CD8-positive, alpha-beta T cell (primary cell): ENCODE measurements at regions of chr1 and their contacts with region 1.

Region 1: GRCh38 chr1:169794530-169795416 is at the start of gene METTL18:
- DNase-seq: peak; percentile 86 to 96 (median 91)
- ATAC-seq: peak; percentile 96
- H3K4me3 ChIP-seq: peak within 1 kb of the TSS; percentile 77 to 81
- H3K4me3 Mint-ChIP-seq: peak within 1 kb of the TSS; percentile 100
- H3K27ac ChIP-seq: peak within 1 kb of the TSS; percentile 78 to 95
- H3K27ac Mint-ChIP-seq: peak within 1 kb of the TSS; percentile 100
- H3K4me1 ChIP-seq: peaks cover 22% of the 10 kb centered on the region
- H3K4me1 Mint-ChIP-seq: peaks cover 48% of the 10 kb centered on the region
- H3K27me3 ChIP-seq: no peaks in the 10 kb centered on the region
- H3K27me3 Mint-ChIP-seq: no peaks in the 10 kb centered on the region
- CTCF ChIP-seq: peak; percentile 34
- total RNA-seq, gene METTL18: 2.2 to 3.7 TPM

Region 2: GRCh38 chr1:168225476-168226190 is 1569.1 kb before region 1 on chr1 and contains the start of gene SFT2D2:
- CTCF ChIA-PET with region 1: no interaction called
- POLR2A ChIA-PET with region 1: no interaction called
- intact Hi-C with region 1: loop called (anchors 5 to 10 kb)
- DNase-seq: peak; percentile 46 to 89 (median 77)
- ATAC-seq: peak; percentile 98
- H3K4me3 ChIP-seq: peak within 1 kb of the TSS; percentile 90 to 93
- H3K4me3 Mint-ChIP-seq: peak within 1 kb of the TSS; percentile 94
- H3K27ac ChIP-seq: peak within 1 kb of the TSS; percentile 71 to 75
- H3K27ac Mint-ChIP-seq: peak within 1 kb of the TSS; percentile 93
- H3K4me1 ChIP-seq: peaks cover 37% of the 10 kb centered on the region
- H3K4me1 Mint-ChIP-seq: peaks cover 49% of the 10 kb centered on the region
- H3K27me3 ChIP-seq: no peaks in the 10 kb centered on the region
- H3K27me3 Mint-ChIP-seq: peaks cover 3% of the 10 kb centered on the region
- CTCF ChIP-seq: no peak
- total RNA-seq, gene SFT2D2: 61.2 to 62.3 TPM

Region 3: GRCh38 chr1:169485544-169486278 is 309.1 kb before region 1 on chr1 and contains the start of gene SLC19A2:
- CTCF ChIA-PET with region 1: no interaction called
- POLR2A ChIA-PET with region 1: no interaction called
- intact Hi-C with region 1: loop called (anchors 1 to 2 kb)
- DNase-seq: peak; percentile 84 to 97 (median 93)
- ATAC-seq: peak; percentile 98
- H3K4me3 ChIP-seq: peak within 1 kb of the TSS; percentile 69 to 79
- H3K4me3 Mint-ChIP-seq: peak within 1 kb of the TSS; percentile 97
- H3K27ac ChIP-seq: peak within 1 kb of the TSS; percentile 73 to 79
- H3K27ac Mint-ChIP-seq: peak within 1 kb of the TSS; percentile 95
- H3K4me1 ChIP-seq: peaks cover 20% of the 10 kb centered on the region
- H3K4me1 Mint-ChIP-seq: peaks cover 43% of the 10 kb centered on the region
- H3K27me3 ChIP-seq: no peaks in the 10 kb centered on the region
- H3K27me3 Mint-ChIP-seq: no peaks in the 10 kb centered on the region
- CTCF ChIP-seq: no peak
- total RNA-seq, gene SLC19A2: 4.7 to 6.1 TPM

Region 4: DNA sequence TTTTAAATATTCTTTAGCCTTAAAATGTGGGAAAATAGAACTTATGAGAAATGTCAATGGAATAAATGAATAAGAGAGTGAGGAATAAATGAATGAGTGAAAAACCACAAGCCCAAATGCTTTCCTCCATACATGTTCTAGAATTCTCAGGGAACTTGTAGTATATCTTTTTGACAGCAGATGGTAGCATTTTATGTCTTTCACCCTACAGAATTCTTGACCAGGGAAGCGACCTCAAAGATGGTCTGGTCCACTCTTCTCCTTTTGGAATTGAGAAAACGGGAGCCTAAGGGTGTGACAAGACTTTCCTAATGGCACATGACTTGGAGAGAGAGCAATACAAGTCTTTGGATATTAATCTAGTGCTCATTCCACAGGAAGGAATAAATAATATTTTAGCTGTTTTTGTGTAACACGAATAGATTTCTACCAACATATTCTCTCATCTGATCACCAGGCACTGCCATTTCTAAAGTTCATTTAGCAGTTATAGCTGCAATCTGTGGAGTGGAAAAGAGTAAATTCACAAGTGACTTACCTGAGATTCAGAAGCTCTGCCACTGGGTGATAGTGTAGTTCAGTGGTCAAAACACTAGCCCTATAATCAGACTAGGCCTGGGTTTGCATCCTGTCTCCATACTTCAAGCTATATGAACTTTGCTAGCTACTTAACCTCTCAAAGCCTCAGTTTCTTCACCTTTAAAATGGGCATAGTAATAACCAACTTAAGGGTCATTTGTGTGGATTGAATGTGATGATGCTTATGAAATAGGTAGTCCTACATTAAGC is 193.5 kb before region 1 on chr1:
- CTCF ChIA-PET with region 1: interaction called, 5 read pairs
- POLR2A ChIA-PET with region 1: no interaction called
- intact Hi-C with region 1: loop called in 1 of 2 experiments (anchors 5 kb)
- DNase-seq: peak in 2 of 9 experiments; percentile 45 to 61
- ATAC-seq: no peak
- H3K4me3 ChIP-seq: no peak overlapping the region
- H3K4me3 Mint-ChIP-seq: no peak overlapping the region
- H3K27ac ChIP-seq: peak overlapping the region in 1 of 2 experiments; percentile 3
- H3K27ac Mint-ChIP-seq: peak overlapping the region; percentile 53
- H3K4me1 ChIP-seq: peaks cover 54% of the 10 kb centered on the region
- H3K4me1 Mint-ChIP-seq: peaks cover 54% of the 10 kb centered on the region
- H3K27me3 ChIP-seq: no peaks in the 10 kb centered on the region
- H3K27me3 Mint-ChIP-seq: no peaks in the 10 kb centered on the region
- CTCF ChIP-seq: peak; percentile 67

Region 5: GRCh38 chr1:170531758-170532657 is 737.2 kb after region 1 on chr1 and contains the start of gene GORAB:
- CTCF ChIA-PET with region 1: no interaction called
- POLR2A ChIA-PET with region 1: no interaction called
- intact Hi-C with region 1: loop called in 1 of 2 experiments (anchors 10 kb)
- DNase-seq: peak; percentile 72 to 93 (median 85)
- ATAC-seq: peak; percentile 90
- H3K4me3 ChIP-seq: peak within 1 kb of the TSS; percentile 73 to 86
- H3K4me3 Mint-ChIP-seq: no peak within 1 kb of the TSS
- H3K27ac ChIP-seq: peak within 1 kb of the TSS; percentile 80 to 91
- H3K27ac Mint-ChIP-seq: no peak within 1 kb of the TSS
- H3K4me1 ChIP-seq: peaks cover 14% of the 10 kb centered on the region
- H3K4me1 Mint-ChIP-seq: peaks cover 22% of the 10 kb centered on the region
- H3K27me3 ChIP-seq: no peaks in the 10 kb centered on the region
- H3K27me3 Mint-ChIP-seq: no peaks in the 10 kb centered on the region
- CTCF ChIP-seq: no peak
- total RNA-seq, gene GORAB: 24.8 to 26.1 TPM